ENCODE measurements at regions of chr6 and their contacts with region 1.

Region 1: GRCh38 chr6:31945507-31946369 is at the start of gene CFB:
- DNase-seq: peak; percentile 56
- H3K4me3 ChIP-seq: no peak within 1 kb of the TSS
- H3K27ac ChIP-seq: no peak within 1 kb of the TSS
- H3K4me1 ChIP-seq: peaks cover 3% of the 10 kb centered on the region
- H3K27me3 ChIP-seq: peaks cover 3 to 11% of the 10 kb centered on the region in 2 experiments
- CTCF ChIP-seq: no peak
- POLR2A ChIP-seq: no peak
- total RNA-seq, gene CFB: 0.51 and 1.5 TPM in 2 replicates

Region 2: GRCh38 chr6:31907158-31907813 is 38.5 kb before region 1 on chr6:
- CTCF ChIA-PET with region 1: interaction called, 4 read pairs
- POLR2A ChIA-PET with region 1: interaction called, 11 read pairs
- dilution Hi-C with region 1: no loop called
- intact Hi-C with region 1: no loop called
- DNase-seq: no peak
- H3K4me3 ChIP-seq: no peak overlapping the region
- H3K27ac ChIP-seq: no peak overlapping the region
- H3K4me1 ChIP-seq: peaks cover 3% of the 10 kb centered on the region
- H3K27me3 ChIP-seq: peaks cover 5 to 12% of the 10 kb centered on the region in 2 experiments
- CTCF ChIP-seq: no peak
- POLR2A ChIP-seq: no peak

Region 3: DNA sequence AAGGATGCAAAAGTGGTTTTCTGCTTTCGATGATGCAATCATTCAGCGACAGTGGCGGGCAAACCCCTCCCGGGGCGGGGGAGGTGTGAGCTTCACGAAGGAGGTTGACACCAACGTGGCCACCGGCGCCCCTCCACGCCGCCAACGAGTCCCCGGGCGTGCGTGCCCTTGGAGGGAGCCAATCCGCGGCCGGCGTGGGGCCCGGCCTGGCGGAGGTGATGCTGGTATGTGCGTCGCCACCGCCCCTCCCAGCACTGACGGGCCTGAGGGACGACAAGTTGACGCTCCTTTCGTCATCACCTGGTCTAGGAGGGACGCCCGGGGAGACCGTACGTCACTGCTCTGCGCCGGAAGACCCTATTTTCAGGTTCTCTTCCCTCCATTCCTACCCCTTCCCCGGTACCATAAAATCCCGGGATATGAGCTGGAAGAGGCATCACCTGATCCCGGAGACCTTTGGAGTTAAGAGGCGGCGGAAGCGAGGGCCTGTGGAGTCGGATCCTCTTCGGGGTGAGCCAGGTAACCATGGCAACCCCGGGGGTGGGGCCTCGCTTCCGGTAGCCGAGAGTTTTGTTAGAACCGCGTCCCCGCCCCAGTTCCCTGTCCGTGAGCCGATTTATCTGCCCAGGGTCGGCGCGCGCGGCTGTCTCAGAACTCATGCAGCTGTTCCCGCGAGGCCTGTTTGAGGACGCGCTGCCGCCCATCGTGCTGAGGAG is 26.4 kb after region 1 on chr6 and contains the start of gene DXO:
- CTCF ChIA-PET with region 1: no interaction called
- POLR2A ChIA-PET with region 1: no interaction called
- dilution Hi-C with region 1: no loop called
- intact Hi-C with region 1: no loop called
- DNase-seq: peak; percentile 98
- H3K4me3 ChIP-seq: peak within 1 kb of the TSS; percentile 51 to 73 (median 63)
- H3K27ac ChIP-seq: peak within 1 kb of the TSS; percentile 79
- H3K4me1 ChIP-seq: peaks cover 17% of the 10 kb centered on the region
- H3K27me3 ChIP-seq: no peaks in the 10 kb centered on the region
- CTCF ChIP-seq: no peak
- POLR2A ChIP-seq: no peak
- total RNA-seq, gene DXO: 18.0 and 20.7 TPM in 2 replicates

Region 4: GRCh38 chr6:32070814-32071543 is 125.2 kb after region 1 on chr6:
- CTCF ChIA-PET with region 1: no interaction called
- POLR2A ChIA-PET with region 1: no interaction called
- dilution Hi-C with region 1: no loop called
- intact Hi-C with region 1: no loop called
- DNase-seq: no peak
- H3K4me3 ChIP-seq: no peak overlapping the region
- H3K27ac ChIP-seq: no peak overlapping the region
- H3K4me1 ChIP-seq: no peaks in the 10 kb centered on the region
- H3K27me3 ChIP-seq: peaks cover 0 to 3% of the 10 kb centered on the region in 2 experiments
- CTCF ChIP-seq: no peak
- POLR2A ChIP-seq: no peak

Measured in endothelial cell of umbilical vein (primary cell).